Activated CD4-positive, alpha-beta T cell treated with anti-CD3 and anti-CD28 coated beads for 36 hours (primary cell): ENCODE measurements at regions of chr19 and their contacts with region 1.

Region 1: DNA sequence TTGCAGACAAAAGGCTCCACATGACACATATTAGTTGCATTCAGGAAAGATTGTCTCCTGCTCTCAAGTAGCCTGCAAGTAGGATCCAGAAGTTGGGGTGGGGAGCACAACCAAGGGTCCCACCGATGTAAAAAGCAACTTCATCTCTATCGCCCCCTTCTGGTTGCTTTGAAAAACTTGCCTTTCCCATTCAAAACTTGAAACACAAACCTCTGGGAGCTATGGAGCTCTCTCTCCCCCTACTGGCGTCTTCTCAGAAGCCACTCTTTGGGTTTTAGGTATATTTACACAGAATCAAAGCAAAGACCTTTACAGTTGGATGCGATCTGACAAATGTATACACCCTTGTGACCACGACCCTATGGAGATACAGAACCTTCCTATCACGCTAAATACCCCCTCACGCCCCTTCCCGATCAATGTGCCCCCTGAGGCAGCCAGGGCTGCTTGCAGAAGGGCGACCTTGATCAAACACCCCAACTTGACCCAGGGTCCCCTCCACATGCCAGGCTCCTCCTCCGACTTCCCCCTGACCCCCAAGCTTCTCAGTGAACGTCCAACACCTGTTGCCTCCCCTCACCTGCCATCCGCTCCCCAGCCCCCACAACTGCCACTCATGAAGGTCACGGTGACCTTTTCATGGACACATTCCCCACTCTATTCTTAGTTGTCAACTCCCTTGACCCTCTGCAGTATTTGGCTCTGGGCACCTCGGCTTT is 10.1 kb downstream of the NOSIP start:
- DNase-seq: peak; percentile 82
- ATAC-seq: peak; percentile 54
- H3K4me3 Mint-ChIP-seq: peak overlapping the region; percentile 16
- H3K27ac Mint-ChIP-seq: peak overlapping the region; percentile 76
- H3K4me1 Mint-ChIP-seq: peaks cover 56% of the 10 kb centered on the region
- H3K27me3 Mint-ChIP-seq: no peaks in the 10 kb centered on the region

Region 2: GRCh38 chr19:48461982-48462655 is 1108.2 kb before region 1 on chr19:
- CTCF ChIA-PET with region 1: no interaction called
- POLR2A ChIA-PET with region 1: no interaction called
- intact Hi-C with region 1: no loop called
- DNase-seq: peak; percentile 43
- ATAC-seq: peak; percentile 60
- H3K4me3 Mint-ChIP-seq: no peak overlapping the region
- H3K27ac Mint-ChIP-seq: no peak overlapping the region
- H3K4me1 Mint-ChIP-seq: peaks cover 2% of the 10 kb centered on the region
- H3K27me3 Mint-ChIP-seq: no peaks in the 10 kb centered on the region

Region 3: DNA sequence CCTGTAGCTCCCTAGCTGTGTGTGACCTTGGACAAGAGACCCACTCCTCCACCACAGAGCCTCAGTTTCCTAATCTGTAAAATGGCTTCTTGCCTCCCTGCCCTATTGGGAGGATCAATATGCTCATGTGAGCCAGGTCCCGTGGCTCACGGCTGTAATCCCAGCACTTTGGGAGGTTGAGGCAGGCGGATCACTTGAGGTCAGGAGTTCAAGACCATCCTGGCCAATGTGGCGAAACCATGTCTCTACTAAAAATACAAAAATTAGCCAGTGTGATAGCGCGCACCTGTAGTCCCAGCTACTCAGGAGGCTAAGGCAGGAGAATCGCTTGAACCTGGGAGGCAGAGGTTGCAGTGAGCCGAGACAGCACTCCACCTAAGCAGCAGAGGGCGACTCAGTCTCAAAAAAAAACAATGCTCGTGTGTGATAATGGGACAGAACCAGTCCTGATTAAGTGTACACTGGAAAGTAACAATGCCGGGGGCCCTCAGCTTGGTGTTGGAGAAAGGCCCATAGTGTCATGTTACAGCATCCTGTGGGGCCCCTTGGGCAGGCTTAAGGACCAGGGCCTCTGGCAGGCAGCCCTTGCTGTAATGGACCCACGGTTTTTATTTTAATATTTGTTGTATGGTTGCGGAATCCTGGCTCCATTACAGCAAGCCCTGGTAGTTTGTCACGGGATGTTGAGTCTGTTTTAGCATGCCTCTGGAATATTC is 67.3 kb before region 1 on chr19:
- CTCF ChIA-PET with region 1: interaction called, 135 read pairs
- POLR2A ChIA-PET with region 1: interaction called, 8 read pairs
- intact Hi-C with region 1: loop called (anchors 1 kb)
- DNase-seq: peak; percentile 65
- ATAC-seq: peak; percentile 28
- H3K4me3 Mint-ChIP-seq: no peak overlapping the region
- H3K27ac Mint-ChIP-seq: no peak overlapping the region
- H3K4me1 Mint-ChIP-seq: peaks cover 44% of the 10 kb centered on the region
- H3K27me3 Mint-ChIP-seq: no peaks in the 10 kb centered on the region

Region 4: GRCh38 chr19:49533551-49534488 is 36.5 kb before region 1 on chr19:
- CTCF ChIA-PET with region 1: interaction called, 10 read pairs
- POLR2A ChIA-PET with region 1: no interaction called
- intact Hi-C with region 1: no loop called
- DNase-seq: peak; percentile 90
- ATAC-seq: peak; percentile 87
- H3K4me3 Mint-ChIP-seq: peak overlapping the region; percentile 78
- H3K27ac Mint-ChIP-seq: peak overlapping the region; percentile 71
- H3K4me1 Mint-ChIP-seq: peaks cover 22% of the 10 kb centered on the region
- H3K27me3 Mint-ChIP-seq: peaks cover 3% of the 10 kb centered on the region

Region 5: GRCh38 chr19:49555600-49556411 is 14.5 kb before region 1 on chr19:
- CTCF ChIA-PET with region 1: interaction called, 161 read pairs
- POLR2A ChIA-PET with region 1: interaction called, 3 read pairs
- intact Hi-C with region 1: loop called in 1 of 2 experiments (anchors 1 kb)
- DNase-seq: peak; percentile 92
- ATAC-seq: peak; percentile 62
- H3K4me3 Mint-ChIP-seq: peak overlapping the region; percentile 35
- H3K27ac Mint-ChIP-seq: peak overlapping the region; percentile 98
- H3K4me1 Mint-ChIP-seq: peaks cover 82% of the 10 kb centered on the region
- H3K27me3 Mint-ChIP-seq: no peaks in the 10 kb centered on the region

Region 6: DNA sequence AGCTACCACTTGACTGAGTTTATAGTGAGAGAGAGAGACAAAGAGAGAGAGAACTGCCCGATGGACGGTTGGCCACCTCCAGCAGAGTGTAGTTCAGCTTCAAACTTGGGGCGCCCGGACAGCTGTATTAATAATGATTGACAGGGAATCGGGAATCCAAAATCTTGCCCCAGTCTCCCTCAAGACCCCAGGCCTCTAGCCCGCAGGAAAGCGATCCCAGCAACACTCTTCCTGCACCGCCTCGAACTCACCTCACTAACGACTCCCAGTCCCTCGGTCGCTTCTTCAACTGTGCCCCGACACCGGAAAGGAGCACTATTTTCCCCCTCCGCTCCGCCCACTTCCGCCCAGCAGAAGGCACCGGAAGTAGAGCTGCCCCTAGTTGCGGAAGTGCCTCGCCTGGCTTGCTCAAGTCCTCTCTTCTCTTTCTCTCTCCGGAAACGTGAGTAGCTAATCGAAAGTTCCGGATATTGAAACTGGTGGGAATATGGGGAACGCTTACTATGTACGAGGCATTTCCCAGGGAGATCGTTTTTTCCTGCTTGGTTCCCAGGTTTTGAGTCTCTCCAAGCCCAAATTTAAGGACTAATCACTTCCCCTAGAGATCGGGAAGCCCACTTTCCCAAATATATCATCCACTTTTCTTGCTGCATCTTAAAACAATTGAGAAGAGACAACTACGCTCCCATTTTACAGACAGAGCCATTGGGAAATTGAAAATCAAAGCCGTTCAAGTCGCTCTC is 10.1 kb after region 1 on chr19 and contains the start of gene NOSIP:
- CTCF ChIA-PET with region 1: interaction called, 36 read pairs
- POLR2A ChIA-PET with region 1: interaction called, 3 read pairs
- intact Hi-C with region 1: no loop called
- DNase-seq: peak; percentile 98
- ATAC-seq: peak; percentile 97
- H3K4me3 Mint-ChIP-seq: peak within 1 kb of the TSS; percentile 92
- H3K27ac Mint-ChIP-seq: peak within 1 kb of the TSS; percentile 89
- H3K4me1 Mint-ChIP-seq: peaks cover 34% of the 10 kb centered on the region
- H3K27me3 Mint-ChIP-seq: no peaks in the 10 kb centered on the region
- total RNA-seq, gene NOSIP: 71.4 to 73.1 TPM